Right lobe of liver (tissue), 6 donors: ENCODE measurements at regions of chr12 and their contacts with region 1.

Region 1: GRCh38 chr12:128969480-128970055 is 116.3 kb downstream of the GLT1D1 start:
- DNase-seq: peak; percentile 60 to 70 (median 70)
- ATAC-seq: peak; percentile 64 to 79 (median 68)
- H3K4me3 ChIP-seq: no peak overlapping the region
- H3K27ac ChIP-seq: no peak overlapping the region
- H3K4me1 ChIP-seq: peaks cover 0 to 11% (median 5%) of the 10 kb centered on the region in 4 donors
- H3K27me3 ChIP-seq: no peaks in the 10 kb centered on the region
- CTCF ChIP-seq: peak; percentile 54 to 68 (median 60)
- POLR2A ChIP-seq: no peak

Region 2: GRCh38 chr12:128180166-128180565 is 789.4 kb before region 1 on chr12:
- intact Hi-C with region 1: no loop called
- DNase-seq: no peak
- ATAC-seq: no peak
- H3K4me3 ChIP-seq: no peak overlapping the region
- H3K27ac ChIP-seq: no peak overlapping the region
- H3K4me1 ChIP-seq: no peaks in the 10 kb centered on the region
- H3K27me3 ChIP-seq: no peaks in the 10 kb centered on the region
- CTCF ChIP-seq: no peak
- POLR2A ChIP-seq: no peak

Region 3: DNA sequence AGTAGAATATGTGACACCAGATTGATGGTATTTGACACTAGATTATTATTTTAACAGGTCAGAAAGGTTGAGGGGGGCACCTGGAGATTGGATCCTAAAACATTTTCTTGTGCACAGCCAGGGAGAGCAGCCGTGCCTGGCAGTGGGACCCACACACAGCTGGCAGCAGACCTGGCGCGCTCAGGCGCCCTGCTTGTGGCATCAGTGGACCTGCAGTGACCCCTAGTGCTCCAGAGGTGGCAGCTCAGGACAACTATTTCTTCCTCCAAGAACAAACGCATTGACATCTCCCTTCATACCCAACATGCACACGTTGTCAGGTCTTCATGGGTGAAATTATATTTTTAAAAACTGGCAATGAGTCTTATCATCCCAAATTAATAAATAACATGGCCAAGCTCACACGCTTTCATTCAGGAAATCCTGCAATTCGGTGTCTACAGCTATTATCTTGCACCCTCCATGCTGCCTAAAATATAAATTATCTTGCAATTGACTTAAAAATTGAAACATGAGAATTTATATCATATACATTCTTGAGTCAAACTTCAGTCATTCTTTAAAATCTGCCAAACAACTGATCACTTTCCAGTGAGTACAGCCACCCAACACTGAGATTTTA is 942.0 kb after region 1 on chr12:
- intact Hi-C with region 1: loop called in 1 of 2 experiments (anchors 10 kb)
- DNase-seq: peak in 2 of 3 donors; percentile 58 to 65
- ATAC-seq: peak; percentile 88 to 95 (median 90)
- H3K4me3 ChIP-seq: no peak overlapping the region
- H3K27ac ChIP-seq: no peak overlapping the region
- H3K4me1 ChIP-seq: no peaks in the 10 kb centered on the region
- H3K27me3 ChIP-seq: no peaks in the 10 kb centered on the region
- CTCF ChIP-seq: peak; percentile 66 to 85 (median 79)
- POLR2A ChIP-seq: no peak